Activated CD8-positive, alpha-beta T cell treated with anti-CD3 and anti-CD28 coated beads for 36 hours (primary cell): ENCODE measurements at regions of chr7 and their contacts with region 1.

Region 1: DNA sequence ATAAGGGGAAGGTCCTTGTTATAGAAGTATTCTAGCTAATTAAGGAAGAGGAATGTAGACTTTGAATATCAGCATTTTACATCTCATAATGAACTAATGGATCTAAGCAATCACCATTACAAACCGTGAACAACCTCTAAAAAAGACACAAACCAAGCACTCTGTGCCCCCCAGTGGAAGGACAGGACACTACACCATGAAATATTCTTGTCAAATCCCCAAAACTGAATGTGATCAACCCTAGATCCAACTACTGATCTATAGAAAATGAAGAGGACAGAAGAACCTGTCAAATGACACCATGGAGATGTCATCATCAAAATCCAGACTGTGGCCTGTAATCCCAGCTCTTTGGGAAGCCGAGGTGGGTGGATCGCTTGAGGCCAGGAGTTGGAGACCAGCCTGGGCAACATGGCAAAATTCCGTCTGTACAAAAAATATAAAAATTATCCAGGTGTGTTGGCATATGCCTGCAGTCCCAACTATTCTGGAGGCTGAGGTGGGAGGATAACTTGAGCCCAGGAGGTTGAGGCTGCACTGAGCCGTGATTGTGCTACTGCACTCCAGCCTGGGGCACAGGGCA is 111.3 kb upstream of the CARD11 start:
- DNase-seq: peak; percentile 84
- ATAC-seq: peak; percentile 94
- H3K4me3 Mint-ChIP-seq: no peak overlapping the region
- H3K27ac Mint-ChIP-seq: no peak overlapping the region
- H3K4me1 Mint-ChIP-seq: peaks cover 22% of the 10 kb centered on the region
- H3K27me3 Mint-ChIP-seq: no peaks in the 10 kb centered on the region
- CTCF ChIP-seq: peak; percentile 83

Region 2: GRCh38 chr7:2886900-2887299 is 268.1 kb before region 1 on chr7:
- CTCF ChIA-PET with region 1: interaction called, 20 read pairs
- POLR2A ChIA-PET with region 1: no interaction called
- intact Hi-C with region 1: loop called (anchors 5 kb)
- DNase-seq: peak; percentile 73
- ATAC-seq: peak; percentile 92
- H3K4me3 Mint-ChIP-seq: no peak overlapping the region
- H3K27ac Mint-ChIP-seq: no peak overlapping the region
- H3K4me1 Mint-ChIP-seq: peaks cover 3% of the 10 kb centered on the region
- H3K27me3 Mint-ChIP-seq: no peaks in the 10 kb centered on the region
- CTCF ChIP-seq: peak; percentile 76

Region 3: DNA sequence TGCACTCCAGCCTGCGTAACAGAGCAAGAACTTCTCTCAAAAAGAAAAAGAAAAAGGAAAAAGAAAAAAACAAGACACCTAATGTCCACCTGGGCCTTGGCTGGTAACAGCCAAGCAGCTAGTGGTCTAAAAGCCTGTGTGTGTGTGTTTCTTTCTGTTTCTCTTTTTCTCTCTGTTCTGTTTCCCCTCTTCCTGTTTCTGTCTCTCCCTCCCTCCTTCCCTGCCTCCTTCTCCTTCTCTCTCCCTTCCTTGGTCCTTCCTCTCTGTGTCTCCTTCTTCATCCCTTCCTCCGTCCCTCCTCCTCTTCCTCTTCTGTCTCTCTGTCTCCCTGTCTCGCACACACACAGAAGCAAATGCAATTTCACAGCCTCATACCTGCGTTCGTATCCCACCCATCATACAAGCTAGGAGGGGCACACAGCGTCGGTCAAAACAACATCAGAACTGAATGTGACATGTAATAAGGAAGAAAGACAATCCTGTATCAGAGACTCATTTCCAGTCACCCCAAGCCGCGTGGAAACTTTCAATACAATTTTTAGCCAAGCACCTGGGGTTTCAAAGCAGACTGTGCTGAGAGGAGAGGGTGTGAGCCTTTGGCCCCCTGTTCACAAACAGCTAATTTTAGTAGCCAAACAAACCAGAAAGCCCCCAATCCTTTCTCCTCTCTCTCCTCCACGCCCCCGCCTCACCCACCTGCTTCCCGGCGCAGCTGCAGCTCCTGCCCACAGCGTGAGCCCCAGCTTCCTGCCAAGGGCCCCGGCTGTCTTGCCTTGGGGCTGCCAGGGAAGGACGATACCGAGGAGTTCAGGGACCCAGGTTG is 260.7 kb before region 1 on chr7:
- CTCF ChIA-PET with region 1: interaction called, 20 read pairs
- POLR2A ChIA-PET with region 1: no interaction called
- intact Hi-C with region 1: loop called (anchors 5 kb)
- DNase-seq: peak; percentile 83
- ATAC-seq: peak; percentile 71
- H3K4me3 Mint-ChIP-seq: peak overlapping the region; percentile 73
- H3K27ac Mint-ChIP-seq: peak overlapping the region; percentile 95
- H3K4me1 Mint-ChIP-seq: peaks cover 20% of the 10 kb centered on the region
- H3K27me3 Mint-ChIP-seq: no peaks in the 10 kb centered on the region
- CTCF ChIP-seq: no peak

Region 4: GRCh38 chr7:3087243-3087642 is 67.8 kb before region 1 on chr7:
- CTCF ChIA-PET with region 1: interaction called, 22 read pairs
- POLR2A ChIA-PET with region 1: no interaction called
- intact Hi-C with region 1: no loop called
- DNase-seq: no peak
- ATAC-seq: no peak
- H3K4me3 Mint-ChIP-seq: no peak overlapping the region
- H3K27ac Mint-ChIP-seq: no peak overlapping the region
- H3K4me1 Mint-ChIP-seq: peaks cover 27% of the 10 kb centered on the region
- H3K27me3 Mint-ChIP-seq: no peaks in the 10 kb centered on the region
- CTCF ChIP-seq: no peak

Region 5: DNA sequence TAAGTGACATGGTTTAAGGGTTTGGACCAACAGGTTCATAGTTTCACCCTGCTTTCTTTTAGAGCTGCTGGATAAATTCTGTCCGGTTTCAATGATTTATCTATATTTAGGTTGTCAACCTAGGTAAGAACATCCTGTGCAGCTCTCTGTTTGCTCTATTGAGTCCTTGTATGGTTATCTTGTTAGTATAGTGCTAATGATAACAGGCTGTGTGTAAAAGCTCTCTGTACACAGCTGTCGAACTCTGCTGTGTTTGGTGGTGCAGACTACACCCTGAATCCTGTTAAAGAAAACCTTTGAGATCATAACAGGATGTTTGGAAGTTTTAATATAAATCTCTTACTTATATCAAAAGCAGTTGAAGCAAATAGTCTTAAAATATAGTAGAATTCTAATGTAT is 365.2 kb after region 1 on chr7:
- CTCF ChIA-PET with region 1: no interaction called
- POLR2A ChIA-PET with region 1: no interaction called
- intact Hi-C with region 1: no loop called
- DNase-seq: no peak
- ATAC-seq: no peak
- H3K4me3 Mint-ChIP-seq: no peak overlapping the region
- H3K27ac Mint-ChIP-seq: no peak overlapping the region
- H3K4me1 Mint-ChIP-seq: no peaks in the 10 kb centered on the region
- H3K27me3 Mint-ChIP-seq: no peaks in the 10 kb centered on the region
- CTCF ChIP-seq: no peak